Heart right ventricle (tissue), 16 donors: ENCODE measurements at regions of chr2 and their contacts with region 1.

Region 1: GRCh38 chr2:225668606-225669266 is 269.2 kb downstream of the NYAP2 start:
- DNase-seq: peak in 1 of 2 donors; percentile 6
- ATAC-seq: peak in 3 of 8 donors; percentile 53 to 70 (median 64)
- H3K4me3 ChIP-seq: no peak overlapping the region
- H3K27ac ChIP-seq: no peak overlapping the region
- H3K4me1 ChIP-seq: no peaks in the 10 kb centered on the region
- H3K27me3 ChIP-seq: peaks cover 0 to 11% (median 0%) of the 10 kb centered on the region in 7 donors
- CTCF ChIP-seq: peak in 8 of 9 donors; percentile 26 to 72 (median 64)

Region 2: DNA sequence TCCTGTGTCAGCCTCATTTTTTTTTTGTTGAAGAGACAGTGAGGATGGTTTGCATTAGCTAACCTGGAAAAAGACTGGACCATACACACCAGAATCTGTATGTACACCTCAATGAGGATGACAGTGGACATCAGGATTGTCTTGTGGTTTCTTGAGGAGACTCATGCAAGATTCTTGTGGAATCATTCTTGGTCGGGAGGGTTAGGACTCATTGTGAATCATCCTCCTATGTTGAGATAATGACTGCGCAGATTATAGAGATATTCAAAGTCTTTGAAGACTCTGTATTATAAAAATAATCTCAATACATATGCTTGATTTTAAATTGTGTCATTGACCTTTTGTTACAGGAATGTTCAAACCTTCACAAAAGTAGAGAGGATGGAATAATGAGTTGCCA is 577.4 kb before region 1 on chr2:
- intact Hi-C with region 1: no loop called
- DNase-seq: no peak
- ATAC-seq: no peak
- H3K4me3 ChIP-seq: no peak overlapping the region
- H3K27ac ChIP-seq: no peak overlapping the region
- H3K4me1 ChIP-seq: no peaks in the 10 kb centered on the region
- H3K27me3 ChIP-seq: peaks cover 0 to 6% (median 0%) of the 10 kb centered on the region in 7 donors
- CTCF ChIP-seq: no peak

Region 3: DNA sequence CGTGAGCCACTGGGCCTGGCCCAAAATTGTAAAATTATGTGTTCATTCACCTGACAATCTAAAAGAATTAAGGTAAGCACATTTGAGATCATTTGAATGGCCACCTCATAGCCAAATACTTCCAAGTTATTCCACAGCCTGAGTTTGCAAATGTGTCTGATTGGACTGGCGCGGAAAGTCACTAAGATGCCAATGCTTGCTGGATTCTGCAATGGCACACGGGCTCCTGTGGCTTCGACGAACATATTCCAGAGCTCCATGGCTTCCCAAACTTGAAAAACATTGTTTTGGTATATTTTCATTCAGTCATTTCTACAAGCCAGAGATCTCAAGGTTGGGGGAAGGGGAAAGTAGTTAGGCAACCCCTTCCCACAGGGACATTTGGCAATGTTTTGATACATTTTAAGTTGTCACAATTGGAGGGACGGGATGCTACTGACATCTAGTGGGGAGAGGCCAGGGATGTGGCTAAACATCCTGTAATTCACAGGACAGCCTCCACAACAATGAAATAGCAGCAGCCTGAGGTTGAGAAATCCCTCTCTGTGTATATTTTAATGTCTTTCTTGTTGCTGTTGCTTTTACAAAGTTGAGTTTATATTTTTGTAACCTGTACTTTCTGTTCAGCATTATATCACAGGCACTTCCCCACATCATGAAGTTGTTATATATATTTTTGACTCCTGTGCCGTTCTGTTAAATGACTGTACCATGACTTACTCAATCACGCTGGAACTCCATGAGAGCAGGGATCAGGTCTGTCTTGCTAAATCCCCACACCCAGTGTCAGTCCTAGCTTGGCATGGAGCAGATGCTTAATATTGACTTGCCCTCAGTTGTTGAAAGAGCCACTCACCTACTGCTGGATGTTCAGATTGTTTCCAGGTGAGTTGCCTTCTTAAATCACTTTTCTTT is 1438.4 kb after region 1 on chr2:
- intact Hi-C with region 1: loop called in 9 of 10 experiments (anchors 5 to 10 kb)
- DNase-seq: no peak
- ATAC-seq: peak in 4 of 8 donors; percentile 25 to 73 (median 56)
- H3K4me3 ChIP-seq: no peak overlapping the region
- H3K27ac ChIP-seq: no peak overlapping the region
- H3K4me1 ChIP-seq: no peaks in the 10 kb centered on the region
- H3K27me3 ChIP-seq: no peaks in the 10 kb centered on the region
- CTCF ChIP-seq: peak; percentile 26 to 69 (median 63)